ENCODE measurements at regions of chr9 and their contacts with region 1.

Region 1: DNA sequence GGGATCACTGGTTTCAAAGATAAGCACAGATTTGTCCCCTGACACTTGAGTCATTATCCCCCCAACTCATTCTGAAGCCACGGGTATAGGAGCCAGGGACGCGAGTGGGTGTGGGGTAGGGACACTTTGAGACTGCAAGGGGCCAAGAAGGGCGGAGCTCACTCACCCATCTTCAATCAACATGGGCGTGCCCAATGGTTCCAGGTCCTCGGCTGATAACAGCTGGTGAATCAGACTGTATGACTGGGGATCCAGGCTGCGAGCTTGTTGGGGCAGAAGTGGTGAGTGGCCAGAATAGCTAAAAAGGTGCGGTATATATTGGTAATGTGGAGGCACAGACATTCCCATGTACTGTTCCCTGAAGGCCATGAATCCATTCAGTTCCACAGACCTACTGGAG is 30.7 kb upstream of the NR5A1 start:
- DNase-seq: no peak
- ATAC-seq: no peak
- H3K4me3 ChIP-seq: no peak overlapping the region
- H3K27ac ChIP-seq: no peak overlapping the region
- H3K4me1 ChIP-seq: no peaks in the 10 kb centered on the region
- CTCF ChIP-seq: no peak
- EP300 ChIP-seq: no peak
- POLR2A ChIP-seq: no peak
- RAD21 ChIP-seq: no peak

Region 2: GRCh38 chr9:124415102-124415851 is 122.6 kb before region 1 on chr9 and contains the start of gene PSMB7:
- CTCF ChIA-PET with region 1: interaction called, 122 read pairs
- POLR2A ChIA-PET with region 1: interaction called, 3 read pairs
- DNase-seq: peak; percentile 92 to 99
- ATAC-seq: peak; percentile 86 to 90
- H3K4me3 ChIP-seq: peak within 1 kb of the TSS; percentile 80
- H3K27ac ChIP-seq: peak within 1 kb of the TSS; percentile 70 to 91
- H3K4me1 ChIP-seq: peaks cover 35% of the 10 kb centered on the region
- CTCF ChIP-seq: peak; percentile 71
- EP300 ChIP-seq: no peak
- POLR2A ChIP-seq: peak; percentile 41; the same call in 1 of the 2 replicates
- RAD21 ChIP-seq: no peak
- polyA plus RNA-seq, gene PSMB7: 418 and 429 TPM in 2 replicates

Region 3: DNA sequence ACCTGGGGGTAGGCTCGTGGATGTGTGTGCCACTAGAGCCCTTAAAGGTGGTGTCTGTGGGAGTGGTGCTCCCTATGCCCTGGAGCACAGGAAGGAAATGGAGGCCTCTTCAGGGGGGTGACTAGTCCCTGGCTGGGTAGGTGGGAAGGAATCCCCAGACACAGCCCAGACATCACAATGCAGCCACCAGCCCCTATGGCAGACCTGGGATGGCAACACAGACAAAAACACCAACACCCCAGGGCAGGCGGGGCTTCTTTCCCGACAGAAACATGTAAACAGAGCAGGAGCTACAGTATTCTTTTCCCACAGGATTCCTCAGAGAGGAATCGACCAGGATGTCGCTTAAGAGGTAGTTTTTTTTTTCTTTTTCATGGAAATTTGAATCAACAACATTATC is 20.3 kb before region 1 on chr9:
- CTCF ChIA-PET with region 1: interaction called, 99 read pairs
- POLR2A ChIA-PET with region 1: no interaction called
- DNase-seq: no peak
- ATAC-seq: no peak
- H3K4me3 ChIP-seq: no peak overlapping the region
- H3K27ac ChIP-seq: no peak overlapping the region
- H3K4me1 ChIP-seq: no peaks in the 10 kb centered on the region
- CTCF ChIP-seq: no peak
- EP300 ChIP-seq: no peak
- POLR2A ChIP-seq: no peak
- RAD21 ChIP-seq: no peak

Region 4: DNA sequence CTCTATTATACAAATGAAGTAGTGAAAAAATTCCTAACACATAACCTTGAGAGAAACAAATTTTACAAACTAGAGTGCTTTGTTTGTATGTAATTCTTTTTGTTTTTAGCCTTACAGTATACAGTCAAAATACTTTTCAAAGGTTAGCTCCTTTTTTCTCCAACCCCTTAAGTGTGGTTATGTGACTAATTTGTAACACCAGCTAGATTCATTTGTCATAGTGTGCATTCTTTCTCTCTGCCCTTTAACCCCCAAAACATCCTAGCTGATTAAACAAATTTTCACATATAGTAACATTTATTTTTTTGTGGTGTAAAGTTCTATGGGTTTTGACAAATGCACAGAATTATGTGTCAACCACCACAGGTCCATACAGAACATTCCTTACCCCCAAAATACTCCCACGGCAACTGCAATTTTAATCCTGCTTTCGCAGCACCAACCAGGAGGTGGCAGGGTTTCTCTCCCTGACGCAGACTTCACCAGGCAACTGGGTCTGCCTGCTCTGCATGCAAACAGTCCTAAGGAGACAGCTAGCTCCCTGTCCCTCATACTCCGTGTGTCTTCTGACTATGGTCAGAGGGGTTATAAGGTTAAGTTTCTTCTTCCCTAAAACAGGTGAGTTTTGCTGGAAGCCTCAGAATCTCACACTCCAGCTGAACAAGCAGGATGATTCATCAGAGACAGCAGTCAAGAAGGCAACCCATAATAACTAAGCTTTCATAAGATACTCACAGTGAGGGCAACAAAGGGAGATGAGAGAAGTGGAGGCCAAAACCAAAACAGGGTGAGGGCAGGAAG is 13.7 kb after region 1 on chr9:
- CTCF ChIA-PET with region 1: interaction called, 74 read pairs
- POLR2A ChIA-PET with region 1: no interaction called
- DNase-seq: peak; percentile 66 to 72
- ATAC-seq: peak; percentile 96
- H3K4me3 ChIP-seq: no peak overlapping the region
- H3K27ac ChIP-seq: 0 out of 6 replicates have a peak overlapping the region, but pooled peaks of 1 of the 2 experiments have one; percentile 1
- H3K4me1 ChIP-seq: peaks cover 10% of the 10 kb centered on the region; the same call in 2 of the 3 replicates
- CTCF ChIP-seq: peak; percentile 77
- EP300 ChIP-seq: no peak
- POLR2A ChIP-seq: no peak
- RAD21 ChIP-seq: peak; percentile 73 to 82

Region 5: DNA sequence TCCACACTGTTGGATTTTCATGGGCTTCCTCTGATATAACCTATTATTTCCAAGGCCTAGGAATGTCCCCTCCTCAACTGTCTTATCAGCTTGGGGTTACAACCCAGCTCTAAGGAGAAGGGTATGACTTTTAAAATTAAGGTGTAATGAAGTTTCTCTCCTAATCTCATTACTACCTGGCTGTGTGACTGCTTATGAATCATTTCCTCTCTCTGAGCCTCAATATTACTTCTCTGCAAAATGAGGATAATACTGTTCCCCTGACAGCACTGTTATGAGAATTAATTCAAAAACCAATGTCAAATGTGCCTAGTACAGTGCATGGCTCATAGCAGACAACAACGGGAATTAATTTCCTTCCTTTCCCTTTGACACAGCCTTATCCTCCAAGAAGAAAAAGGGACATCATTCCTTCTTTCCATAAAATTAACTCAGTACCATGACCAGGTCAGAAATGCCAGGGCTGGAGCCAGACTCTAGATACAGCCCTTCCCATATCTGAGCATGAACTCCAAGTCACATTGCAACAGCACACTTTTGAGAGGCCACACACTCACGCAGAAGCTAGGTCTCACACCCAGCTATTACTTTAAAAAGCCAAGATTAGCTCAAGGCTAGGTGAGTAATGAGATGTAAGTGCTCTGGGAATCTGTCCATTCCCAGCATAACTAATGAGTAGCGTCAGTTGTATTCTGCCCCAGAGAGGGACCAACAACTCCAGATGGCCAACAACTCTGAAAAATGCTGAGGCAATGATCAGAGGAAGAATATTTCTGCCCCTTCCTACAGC is 114.5 kb after region 1 on chr9:
- CTCF ChIA-PET with region 1: no interaction called
- POLR2A ChIA-PET with region 1: no interaction called
- DNase-seq: peak; percentile 48 to 75
- ATAC-seq: peak; percentile 90 to 91
- H3K4me3 ChIP-seq: no peak overlapping the region
- H3K27ac ChIP-seq: peak overlapping the region in 1 of 2 experiments; percentile 74; a peak in 3 of 6 replicates
- H3K4me1 ChIP-seq: peaks cover 19% of the 10 kb centered on the region
- CTCF ChIP-seq: no peak
- EP300 ChIP-seq: peak in 1 of 2 experiments; percentile 29; a peak in 1 of 5 replicates
- POLR2A ChIP-seq: no peak
- RAD21 ChIP-seq: no peak

Region 6: DNA sequence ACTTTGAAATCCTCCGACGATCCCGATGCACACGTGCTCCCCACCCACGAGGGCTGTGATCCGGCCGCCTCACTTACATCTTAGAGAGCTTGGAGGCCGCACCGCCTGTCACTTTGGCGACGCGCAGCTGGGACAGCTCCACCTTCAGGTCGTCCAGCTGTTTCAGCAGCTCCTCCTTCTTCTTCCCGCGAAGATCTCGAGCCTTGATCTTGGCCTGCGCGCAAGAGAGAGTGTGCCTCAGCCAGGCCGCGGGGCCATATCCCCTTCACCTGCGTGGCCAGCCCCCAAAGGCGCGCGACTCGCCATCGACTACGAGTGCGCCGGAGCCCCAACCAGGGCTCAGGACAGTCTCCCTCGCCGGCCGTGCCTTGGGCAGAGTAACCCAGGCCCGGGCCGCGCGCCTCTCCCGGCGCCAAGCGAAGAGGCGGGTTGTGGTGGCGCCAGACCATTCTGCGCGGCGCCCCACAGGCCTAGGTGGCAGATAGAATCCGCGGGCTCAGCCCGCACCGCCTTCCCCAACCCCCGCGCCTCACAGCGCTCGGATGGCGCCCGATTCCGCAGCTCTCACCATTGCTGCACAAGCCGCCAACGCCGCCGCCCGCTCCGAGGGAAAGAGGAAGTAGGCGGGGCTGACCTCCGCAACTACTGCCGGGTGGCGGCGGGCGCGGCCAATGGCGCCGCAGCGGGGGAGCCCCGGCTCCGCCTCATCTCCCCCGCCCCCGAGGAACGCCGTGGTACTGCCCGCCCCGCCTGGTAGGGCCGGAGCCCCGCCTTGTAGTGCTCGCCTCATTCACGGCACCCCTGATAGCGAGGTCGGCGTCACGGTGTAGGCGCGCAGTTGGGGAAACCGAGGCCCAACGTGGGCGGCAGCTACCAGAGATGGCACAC is 323.7 kb after region 1 on chr9 and contains the starts of genes ARPC5L and RPL35:
- CTCF ChIA-PET with region 1: no interaction called
- POLR2A ChIA-PET with region 1: no interaction called
- DNase-seq: peak; percentile 94 to 95
- ATAC-seq: peak; percentile 92 to 94
- H3K4me3 ChIP-seq: peak within 1 kb of the TSS; percentile 85
- H3K27ac ChIP-seq: peak within 1 kb of the TSS; percentile 89 to 93
- H3K4me1 ChIP-seq: peaks cover 48% of the 10 kb centered on the region
- CTCF ChIP-seq: no peak
- EP300 ChIP-seq: no peak
- POLR2A ChIP-seq: peak; percentile 86
- RAD21 ChIP-seq: no peak
- polyA plus RNA-seq, gene ARPC5L: 44.9 and 62.8 TPM in 2 replicates
- polyA plus RNA-seq, gene RPL35: 3,076 and 3,452 TPM in 2 replicates